PC-9 (cell line): ENCODE measurements at regions of chr11 and their contacts with region 1.

Region 1: DNA sequence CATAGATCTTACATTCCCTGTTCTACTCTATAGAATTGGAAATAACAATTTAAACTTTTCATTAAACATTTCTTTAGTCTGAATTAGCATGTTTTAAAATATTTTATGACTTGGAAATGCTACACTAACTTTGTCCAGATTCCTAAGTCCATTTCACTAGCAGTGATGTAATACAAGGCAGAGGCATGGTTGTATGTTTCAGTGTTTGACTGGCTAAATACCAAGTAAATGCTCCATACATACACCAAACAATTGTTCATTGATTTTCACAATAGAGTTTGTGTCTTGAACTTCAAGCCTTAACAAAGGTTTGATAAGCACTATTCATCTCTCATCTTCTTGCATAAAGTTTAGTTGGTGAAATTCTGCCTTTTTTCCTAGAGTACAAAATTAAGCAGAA is 13.5 kb downstream of the ZBED5 start:
- DNase-seq: no peak
- H3K4me3 ChIP-seq: no peak overlapping the region
- H3K27ac ChIP-seq: no peak overlapping the region
- H3K4me1 ChIP-seq: peaks cover 21% of the 10 kb centered on the region
- H3K27me3 ChIP-seq: no peaks in the 10 kb centered on the region
- CTCF ChIP-seq: no peak

Region 2: GRCh38 chr11:10899121-10899830 is 54.9 kb after region 1 on chr11:
- CTCF ChIA-PET with region 1: no interaction called
- POLR2A ChIA-PET with region 1: interaction called, 14 read pairs
- intact Hi-C with region 1: no loop called
- DNase-seq: peak; percentile 44 to 57
- H3K4me3 ChIP-seq: peak overlapping the region; percentile 48
- H3K27ac ChIP-seq: peak overlapping the region; percentile 98
- H3K4me1 ChIP-seq: peaks cover 61% of the 10 kb centered on the region
- H3K27me3 ChIP-seq: no peaks in the 10 kb centered on the region
- CTCF ChIP-seq: no peak